ENCODE measurements at regions of chr3 and their contacts with region 1.

Region 1: DNA sequence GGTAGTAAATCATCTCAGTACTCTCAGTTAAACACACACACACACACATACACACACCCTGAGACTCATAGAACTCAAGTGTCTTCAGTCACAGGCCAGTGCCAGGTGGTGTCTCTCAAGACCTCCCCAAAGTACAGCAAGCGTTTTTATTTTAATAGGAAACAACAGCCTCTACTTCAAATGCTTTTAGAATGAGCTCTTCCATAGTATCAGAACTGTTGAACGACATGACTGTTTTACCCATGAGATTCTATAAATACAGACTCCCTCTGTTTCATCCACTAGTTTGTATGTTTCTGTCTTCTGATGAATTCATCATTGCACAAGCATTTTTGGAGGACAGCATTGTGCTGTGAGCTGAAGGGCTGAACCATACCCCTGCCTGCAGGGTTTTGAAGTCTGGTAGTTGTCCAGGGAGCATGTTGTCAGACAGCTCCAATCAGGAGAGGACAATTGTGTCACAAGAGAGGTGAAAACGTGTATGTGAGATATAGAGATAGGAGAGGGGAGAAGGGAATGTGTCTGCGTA is 201.0 kb upstream of the BCL6 start:
- DNase-seq: peak; percentile 90
- H3K4me3 ChIP-seq: peak overlapping the region; percentile 69
- H3K27ac ChIP-seq: peak overlapping the region; percentile 99
- H3K4me1 ChIP-seq: peaks cover 100% of the 10 kb centered on the region
- CTCF ChIP-seq: peak; percentile 41; the same call in 1 of the 2 replicates

Region 2: DNA sequence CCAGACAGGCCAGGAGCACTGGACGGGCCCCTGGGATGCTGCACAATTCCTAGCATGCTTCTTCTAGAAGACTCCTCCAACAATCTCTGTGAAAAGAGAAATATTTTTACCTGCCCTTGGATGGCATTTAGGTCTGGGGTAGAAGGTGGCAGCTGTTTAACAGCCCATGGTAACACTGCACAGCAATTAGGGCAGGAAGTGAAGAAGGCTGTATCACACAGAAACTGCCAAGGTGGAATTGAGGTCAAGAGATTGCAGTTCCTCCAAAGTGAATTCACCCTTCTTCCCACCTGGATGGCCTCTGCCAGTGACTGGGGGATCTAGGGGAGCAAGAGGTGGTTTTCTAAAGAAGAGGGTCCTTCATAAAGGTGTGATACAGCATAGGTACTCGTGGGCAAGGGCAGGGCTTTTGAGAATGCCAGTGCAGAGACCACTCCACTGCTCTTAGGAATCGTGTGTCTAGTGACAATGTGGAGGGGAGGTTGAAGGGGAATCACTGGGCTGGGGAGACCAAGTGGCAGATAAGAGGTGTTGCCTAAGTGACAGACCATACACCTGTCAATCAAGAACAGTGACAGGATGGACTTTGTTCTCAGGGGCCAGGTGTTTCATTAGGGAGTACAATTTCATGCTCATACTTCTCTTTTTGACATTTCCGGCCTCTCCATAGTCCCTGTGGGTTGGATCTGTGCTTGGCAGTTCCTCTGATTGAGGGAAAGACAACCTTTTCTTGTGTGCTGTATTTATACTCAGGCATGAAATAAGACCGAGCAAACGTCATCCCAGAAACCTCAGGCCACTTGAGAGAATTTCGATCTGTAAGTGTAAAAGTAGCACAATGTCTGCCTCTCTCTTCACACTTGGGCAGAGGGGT is 117.4 kb before region 1 on chr3:
- CTCF ChIA-PET with region 1: no interaction called
- POLR2A ChIA-PET with region 1: interaction called, 4 read pairs
- intact Hi-C with region 1: loop called (anchors 5 kb)
- DNase-seq: peak; percentile 89
- H3K4me3 ChIP-seq: peak overlapping the region; percentile 30
- H3K27ac ChIP-seq: peak overlapping the region; percentile 72
- H3K4me1 ChIP-seq: peaks cover 31% of the 10 kb centered on the region
- CTCF ChIP-seq: no peak

Region 3: DNA sequence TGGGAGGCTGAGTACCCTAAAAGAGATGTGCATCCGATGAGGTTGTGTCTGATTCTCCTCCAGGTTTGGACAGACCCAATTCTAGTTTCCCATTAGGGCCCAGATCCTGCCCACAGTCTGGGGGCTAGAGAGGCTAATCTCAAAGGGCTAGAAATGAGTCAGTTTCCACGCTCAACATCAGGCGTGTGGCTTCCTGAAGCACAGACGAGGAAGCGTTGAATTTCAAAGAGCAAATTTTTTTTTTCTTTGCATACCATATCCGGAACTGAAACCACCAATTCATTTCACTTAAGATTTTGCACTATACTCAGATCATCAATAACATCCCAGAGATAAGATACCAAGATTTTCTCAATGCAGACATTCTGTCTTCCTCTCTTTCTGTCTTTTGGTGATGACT is 27.2 kb before region 1 on chr3:
- CTCF ChIA-PET with region 1: interaction called, 9 read pairs
- POLR2A ChIA-PET with region 1: interaction called, 331 read pairs
- intact Hi-C with region 1: loop called (anchors 1 kb)
- DNase-seq: peak; percentile 93
- H3K4me3 ChIP-seq: peak overlapping the region; percentile 55
- H3K27ac ChIP-seq: peak overlapping the region; percentile 97
- H3K4me1 ChIP-seq: peaks cover 99% of the 10 kb centered on the region
- CTCF ChIP-seq: no peak

Region 4: DNA sequence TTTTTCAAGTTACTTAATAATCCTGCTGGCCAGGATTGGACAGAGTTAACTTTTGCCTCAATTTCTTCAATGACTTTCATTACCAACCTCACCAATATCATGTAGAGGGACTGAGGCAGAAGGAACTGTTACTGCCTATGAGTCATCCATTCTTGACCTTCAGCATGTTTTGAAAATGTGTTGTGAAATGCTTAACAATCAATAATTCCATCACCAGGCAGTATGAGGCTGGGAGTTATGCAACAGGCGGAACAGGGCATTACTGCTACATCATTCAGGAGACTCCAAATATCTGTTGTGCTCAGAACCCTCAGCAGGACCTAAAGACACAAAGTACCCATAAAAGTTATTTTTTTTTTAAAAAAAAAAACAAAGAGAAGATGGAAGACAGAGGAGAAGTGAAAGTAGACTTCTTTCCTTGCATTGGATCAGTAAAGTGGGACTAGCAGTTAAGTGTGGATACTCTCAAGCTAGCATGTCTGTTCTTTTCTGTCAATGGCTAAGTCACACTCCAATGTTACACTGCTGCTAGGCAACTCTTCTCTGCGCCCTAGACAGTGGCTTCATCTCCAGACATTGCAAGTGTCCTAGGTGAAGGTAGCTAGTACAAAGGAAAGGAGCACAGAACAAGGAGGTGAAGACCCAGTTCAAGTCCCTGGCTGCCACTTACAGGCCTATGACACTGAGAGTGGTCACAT is 22.8 kb after region 1 on chr3:
- CTCF ChIA-PET with region 1: interaction called, 7 read pairs
- POLR2A ChIA-PET with region 1: interaction called, 1,356 read pairs
- intact Hi-C with region 1: loop called (anchors 1 kb)
- DNase-seq: no peak
- H3K4me3 ChIP-seq: peak overlapping the region; percentile 41
- H3K27ac ChIP-seq: peak overlapping the region; percentile 99
- H3K4me1 ChIP-seq: peaks cover 99% of the 10 kb centered on the region
- CTCF ChIP-seq: no peak; the same call in 1 of the 2 replicates

Region 5: DNA sequence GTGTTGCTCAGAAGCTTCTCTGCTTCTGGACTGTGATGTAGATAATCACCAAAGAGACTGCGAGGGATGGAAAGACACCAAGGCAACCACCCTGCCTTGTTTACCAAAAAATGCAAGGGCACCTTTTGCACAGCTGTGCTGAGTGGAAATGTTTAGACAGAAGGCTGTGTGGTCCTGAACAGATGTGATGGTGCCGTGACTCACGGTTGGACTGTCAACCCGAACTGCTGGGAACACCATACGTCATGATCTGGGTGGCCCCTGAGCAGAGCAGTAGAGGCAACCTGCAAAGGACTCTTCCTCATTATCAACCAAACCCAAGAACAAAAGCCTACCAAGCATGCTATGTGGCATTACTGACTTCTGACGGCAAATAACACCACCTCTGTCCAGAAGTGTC is 146.4 kb after region 1 on chr3:
- CTCF ChIA-PET with region 1: no interaction called
- POLR2A ChIA-PET with region 1: interaction called, 134 read pairs
- intact Hi-C with region 1: no loop called
- DNase-seq: peak; percentile 90
- H3K4me3 ChIP-seq: peak overlapping the region; percentile 6
- H3K27ac ChIP-seq: peak overlapping the region; percentile 76
- H3K4me1 ChIP-seq: peaks cover 91% of the 10 kb centered on the region
- CTCF ChIP-seq: no peak

Region 6: GRCh38 chr3:188752850-188753249 is 806.6 kb after region 1 on chr3:
- CTCF ChIA-PET with region 1: no interaction called
- POLR2A ChIA-PET with region 1: interaction called, 3 read pairs
- intact Hi-C with region 1: loop called (anchors 10 kb)
- DNase-seq: peak; percentile 76
- H3K4me3 ChIP-seq: peak overlapping the region; percentile 54
- H3K27ac ChIP-seq: peak overlapping the region; percentile 89
- H3K4me1 ChIP-seq: peaks cover 68% of the 10 kb centered on the region
- CTCF ChIP-seq: no peak

Measured in OCI-LY7 (cell line).